AG04450 (cell line): ENCODE measurements at regions of chr18 and their contacts with region 1.

Region 1: DNA sequence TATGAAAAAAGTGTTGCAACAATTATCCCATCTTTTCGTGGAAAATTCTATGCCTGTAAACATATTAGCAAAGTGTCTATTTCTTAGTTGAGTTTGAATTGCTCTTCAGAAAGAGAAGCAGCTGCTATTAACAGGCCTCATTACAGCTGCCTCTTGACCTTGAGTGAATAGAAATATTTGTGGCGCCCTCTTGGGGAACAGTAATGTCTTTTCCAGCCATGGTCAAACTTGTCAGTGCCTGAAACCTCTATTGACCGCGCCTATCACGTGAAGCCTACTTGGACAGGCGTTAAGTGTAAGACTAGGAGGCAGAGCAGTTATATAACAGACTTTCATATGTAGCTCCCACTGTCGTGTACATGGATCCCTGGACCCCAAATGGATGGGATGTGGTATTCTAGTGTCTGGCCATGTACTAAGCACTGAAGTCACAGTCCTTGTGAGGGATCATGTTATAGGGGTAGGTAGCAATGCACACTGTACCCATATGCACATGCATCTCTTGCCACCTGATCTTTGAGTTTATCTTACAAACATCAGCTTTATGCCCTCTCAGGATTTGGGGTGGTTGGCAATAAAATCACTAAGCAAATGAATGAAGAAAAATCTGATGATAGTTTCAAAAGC is 245.0 kb downstream of the PTGR3 start:
- DNase-seq: no peak
- H3K4me3 ChIP-seq: no peak overlapping the region
- H3K27ac ChIP-seq: no peak overlapping the region
- H3K27me3 ChIP-seq: no peaks in the 10 kb centered on the region
- CTCF ChIP-seq: peak; percentile 51

Region 2: GRCh38 chr18:74976331-74976909 is 12.5 kb after region 1 on chr18:
- CTCF ChIA-PET with region 1: interaction called, 20 read pairs
- POLR2A ChIA-PET with region 1: no interaction called
- DNase-seq: no peak
- H3K4me3 ChIP-seq: no peak overlapping the region
- H3K27ac ChIP-seq: no peak overlapping the region
- H3K27me3 ChIP-seq: no peaks in the 10 kb centered on the region
- CTCF ChIP-seq: no peak

Region 3: GRCh38 chr18:75441896-75442295 is 478.0 kb after region 1 on chr18:
- CTCF ChIA-PET with region 1: interaction called, 12 read pairs
- POLR2A ChIA-PET with region 1: no interaction called
- DNase-seq: no peak
- H3K4me3 ChIP-seq: no peak overlapping the region
- H3K27ac ChIP-seq: no peak overlapping the region
- H3K27me3 ChIP-seq: peaks cover 4% of the 10 kb centered on the region
- CTCF ChIP-seq: no peak